ENCODE measurements at regions of chr11 and their contacts with region 1.

Region 1: DNA sequence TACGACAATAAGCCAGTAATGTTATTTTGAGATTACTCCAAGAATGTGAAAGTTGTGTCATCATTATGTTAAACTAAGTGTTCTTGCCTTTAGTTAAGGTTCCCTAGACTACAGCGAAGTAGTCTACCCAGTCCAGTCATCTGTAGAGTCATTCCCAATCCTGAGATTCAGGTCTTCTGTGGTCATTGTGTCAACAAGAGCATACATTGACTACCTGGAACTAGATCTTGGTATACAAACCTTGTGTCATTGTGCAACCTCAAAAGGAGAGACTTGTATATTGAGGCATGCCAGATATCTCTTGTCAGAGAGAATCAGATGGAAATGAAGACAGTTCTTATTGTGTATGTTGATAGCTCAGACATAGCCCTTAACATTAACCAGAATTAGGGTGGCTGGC is 115.9 kb downstream of the ATM start:
- DNase-seq: no peak
- ATAC-seq: no peak
- H3K4me3 ChIP-seq: no peak overlapping the region
- H3K4me3 Mint-ChIP-seq: no peak overlapping the region
- H3K27ac ChIP-seq: no peak overlapping the region
- H3K27ac Mint-ChIP-seq: peak overlapping the region; percentile 37 to 69
- H3K4me1 ChIP-seq: no peaks in the 10 kb centered on the region
- H3K4me1 Mint-ChIP-seq: peaks cover 0 to 11% of the 10 kb centered on the region in 2 donors
- H3K27me3 ChIP-seq: no peaks in the 10 kb centered on the region
- H3K27me3 Mint-ChIP-seq: no peaks in the 10 kb centered on the region
- CTCF ChIP-seq: no peak

Region 2: DNA sequence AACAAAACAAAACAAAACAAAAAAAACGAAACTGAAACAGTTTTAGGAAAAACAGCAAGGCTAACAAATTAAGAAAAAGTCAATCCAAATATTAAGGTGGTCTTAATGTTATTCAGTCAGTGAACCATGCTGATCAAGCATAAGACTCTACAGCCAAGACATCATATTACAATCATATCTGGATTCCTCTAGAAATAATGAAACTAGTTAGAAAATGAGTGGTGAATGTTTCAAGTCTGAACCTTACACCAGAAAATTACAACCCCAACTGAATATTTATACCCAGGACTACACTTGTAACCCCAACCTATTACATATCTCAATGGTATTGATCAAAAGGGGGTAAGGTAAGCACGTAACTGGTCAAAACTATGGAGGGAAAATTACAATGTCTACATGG is 168.6 kb before region 1 on chr11:
- intact Hi-C with region 1: loop called (anchors 10 kb)
- DNase-seq: no peak
- ATAC-seq: no peak
- H3K4me3 ChIP-seq: no peak overlapping the region
- H3K4me3 Mint-ChIP-seq: no peak overlapping the region
- H3K27ac ChIP-seq: no peak overlapping the region
- H3K27ac Mint-ChIP-seq: peak overlapping the region; percentile 30 to 71
- H3K4me1 ChIP-seq: no peaks in the 10 kb centered on the region
- H3K4me1 Mint-ChIP-seq: peaks cover 9 to 23% of the 10 kb centered on the region in 2 donors
- H3K27me3 ChIP-seq: no peaks in the 10 kb centered on the region
- H3K27me3 Mint-ChIP-seq: no peaks in the 10 kb centered on the region
- CTCF ChIP-seq: no peak

Region 3: DNA sequence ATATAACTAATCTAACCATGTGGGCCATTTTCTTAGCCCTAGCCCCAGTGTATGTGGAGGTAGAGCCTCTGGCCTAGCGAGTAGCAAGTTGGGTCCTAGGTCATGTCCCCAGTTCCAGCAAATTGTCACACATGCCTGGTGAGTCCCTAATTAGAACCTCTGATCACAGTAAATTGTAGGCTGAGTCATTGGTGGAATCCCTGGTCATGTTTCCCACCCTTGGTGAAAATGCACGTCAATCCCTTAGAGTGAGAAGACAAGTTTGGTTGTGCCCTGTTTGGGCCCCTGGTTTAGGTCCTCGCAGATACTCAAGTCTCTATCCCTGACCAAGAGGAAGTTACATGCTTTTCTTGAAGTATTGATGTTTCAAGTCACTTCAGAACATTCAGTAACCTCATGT is 69.2 kb before region 1 on chr11:
- intact Hi-C with region 1: no loop called
- DNase-seq: no peak
- ATAC-seq: no peak
- H3K4me3 ChIP-seq: no peak overlapping the region
- H3K4me3 Mint-ChIP-seq: no peak overlapping the region
- H3K27ac ChIP-seq: no peak overlapping the region
- H3K27ac Mint-ChIP-seq: peak overlapping the region; percentile 67 to 75
- H3K4me1 ChIP-seq: no peaks in the 10 kb centered on the region
- H3K4me1 Mint-ChIP-seq: peaks cover 12 to 18% of the 10 kb centered on the region in 2 donors
- H3K27me3 ChIP-seq: no peaks in the 10 kb centered on the region
- H3K27me3 Mint-ChIP-seq: no peaks in the 10 kb centered on the region
- CTCF ChIP-seq: no peak

Region 4: DNA sequence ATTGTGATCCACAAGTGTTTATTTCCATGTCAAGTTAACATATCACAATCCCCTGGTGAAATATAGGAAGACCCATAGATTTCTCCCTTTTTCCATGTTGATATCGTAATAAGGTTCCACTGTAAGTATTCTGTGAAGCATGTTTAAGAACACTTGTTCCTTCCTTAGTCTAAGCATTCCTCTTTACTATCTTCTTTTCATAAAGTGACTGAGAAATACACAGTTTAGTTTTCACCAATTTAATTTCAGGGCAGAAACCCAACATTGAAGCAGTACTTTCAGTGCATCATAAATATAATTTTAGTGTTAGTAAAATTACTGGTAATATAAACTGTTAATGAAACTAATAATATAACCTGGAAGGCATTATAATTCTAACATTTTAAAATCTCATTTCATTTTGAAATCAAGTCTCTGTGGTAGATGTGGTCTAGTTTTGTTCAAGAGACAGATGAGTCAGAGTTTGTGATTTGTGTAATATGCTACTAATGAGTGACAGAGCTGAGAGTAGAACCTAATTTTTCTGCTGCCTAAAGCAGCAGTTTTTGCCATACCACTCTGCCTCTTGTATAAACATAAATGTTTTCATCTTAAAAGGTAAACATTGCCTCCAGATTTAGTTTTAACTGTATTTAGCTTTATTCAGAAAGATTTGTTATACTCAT is 36.5 kb before region 1 on chr11:
- intact Hi-C with region 1: no loop called
- DNase-seq: no peak
- ATAC-seq: no peak
- H3K4me3 ChIP-seq: no peak overlapping the region
- H3K4me3 Mint-ChIP-seq: no peak overlapping the region
- H3K27ac ChIP-seq: no peak overlapping the region
- H3K27ac Mint-ChIP-seq: peak overlapping the region; percentile 39 to 48
- H3K4me1 ChIP-seq: no peaks in the 10 kb centered on the region
- H3K4me1 Mint-ChIP-seq: peaks cover 4 to 10% of the 10 kb centered on the region in 2 donors
- H3K27me3 ChIP-seq: no peaks in the 10 kb centered on the region
- H3K27me3 Mint-ChIP-seq: no peaks in the 10 kb centered on the region
- CTCF ChIP-seq: no peak